ENCODE measurements at regions of chr2 and their contacts with region 1.

Region 1: DNA sequence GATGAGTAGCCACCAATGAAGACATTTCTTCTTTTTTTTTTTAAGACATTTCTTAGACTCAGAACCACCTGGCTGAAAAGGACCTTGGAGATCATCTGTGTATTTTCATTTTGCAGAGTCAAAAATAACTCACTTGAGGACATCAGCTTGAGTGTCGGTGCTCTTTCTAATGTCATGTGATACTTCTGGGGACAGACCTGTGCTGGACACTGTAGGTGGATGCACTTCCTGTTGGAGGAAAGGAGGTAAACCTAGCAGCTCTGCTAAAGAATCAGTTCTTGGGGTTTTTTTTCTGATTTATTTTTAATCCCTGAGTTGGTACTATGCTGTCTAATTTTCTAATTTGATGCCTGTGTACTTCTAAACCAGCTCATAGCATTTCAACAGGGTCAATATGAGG is 283.9 kb upstream of the CRIM1 start:
- DNase-seq: no peak
- H3K4me3 ChIP-seq: no peak overlapping the region
- H3K27ac ChIP-seq: no peak overlapping the region
- H3K4me1 ChIP-seq: no peaks in the 10 kb centered on the region
- H3K27me3 ChIP-seq: no peaks in the 10 kb centered on the region
- CTCF ChIP-seq: no peak
- EP300 ChIP-seq: no peak
- POLR2A ChIP-seq: no peak

Region 2: DNA sequence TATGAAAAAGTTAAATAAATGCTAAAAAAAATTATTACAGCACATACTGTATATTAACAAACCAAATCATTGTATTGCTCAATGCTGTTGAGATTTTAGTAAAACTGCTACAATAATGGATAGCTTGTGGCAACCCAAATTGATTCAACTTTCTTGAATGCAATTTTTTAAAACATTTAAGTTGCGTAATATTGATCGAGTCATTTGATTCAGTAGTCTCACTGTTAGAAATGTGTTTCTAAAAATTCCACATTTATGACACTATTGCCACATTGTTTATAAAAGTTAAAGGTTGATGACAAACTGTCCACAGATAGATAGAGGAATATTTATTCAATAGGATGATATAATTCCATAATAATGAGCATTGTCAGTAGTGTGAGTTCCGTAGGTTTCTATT is 356.8 kb before region 1 on chr2:
- intact Hi-C with region 1: loop called in 1 of 4 experiments (anchors 5 kb)
- DNase-seq: no peak
- H3K4me3 ChIP-seq: no peak overlapping the region
- H3K27ac ChIP-seq: no peak overlapping the region
- H3K4me1 ChIP-seq: no peaks in the 10 kb centered on the region
- H3K27me3 ChIP-seq: no peaks in the 10 kb centered on the region
- CTCF ChIP-seq: no peak
- EP300 ChIP-seq: no peak
- POLR2A ChIP-seq: no peak

Region 3: DNA sequence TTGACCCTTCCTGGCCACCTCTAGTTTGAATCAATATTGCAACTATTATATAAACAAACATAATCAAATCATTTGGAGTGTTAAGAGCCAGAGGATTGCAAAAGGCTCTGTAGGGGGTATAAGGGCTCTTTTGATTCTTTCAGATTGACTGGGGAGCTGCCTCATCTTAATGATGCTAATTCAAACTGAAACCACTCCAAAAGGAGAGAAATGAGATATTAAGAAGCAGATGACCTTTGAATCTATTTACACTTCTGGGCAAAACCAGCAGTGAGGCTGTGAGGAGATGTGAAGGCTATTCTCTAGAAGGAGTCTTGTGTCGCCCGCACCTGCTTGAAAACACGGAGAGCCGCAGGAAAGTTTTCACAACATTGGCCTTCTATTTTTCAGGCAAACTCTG is 27.3 kb before region 1 on chr2:
- intact Hi-C with region 1: no loop called
- DNase-seq: no peak
- H3K4me3 ChIP-seq: no peak overlapping the region
- H3K27ac ChIP-seq: no peak overlapping the region
- H3K4me1 ChIP-seq: no peaks in the 10 kb centered on the region
- H3K27me3 ChIP-seq: no peaks in the 10 kb centered on the region
- CTCF ChIP-seq: no peak
- EP300 ChIP-seq: no peak
- POLR2A ChIP-seq: no peak